ENCODE measurements at regions of chr7 and their contacts with region 1.

Region 1: GRCh38 chr7:50304158-50304910 is at the start of gene IKZF1:
- DNase-seq: peak in 12 of 14 experiments; percentile 31 to 81 (median 62)
- ATAC-seq: peak; percentile 25
- H3K4me3 ChIP-seq: peak within 1 kb of the TSS; percentile 87
- H3K4me3 Mint-ChIP-seq: peak within 1 kb of the TSS; percentile 100
- H3K27ac ChIP-seq: peak within 1 kb of the TSS; percentile 67 to 93
- H3K27ac Mint-ChIP-seq: peak within 1 kb of the TSS; percentile 90
- H3K4me1 ChIP-seq: peaks cover 40% of the 10 kb centered on the region
- H3K4me1 Mint-ChIP-seq: peaks cover 63% of the 10 kb centered on the region
- H3K27me3 ChIP-seq: no peaks in the 10 kb centered on the region
- H3K27me3 Mint-ChIP-seq: no peaks in the 10 kb centered on the region
- CTCF ChIP-seq: no peak
- total RNA-seq, gene IKZF1: 297 to 300 TPM

Region 2: GRCh38 chr7:50147951-50148808 is 156.2 kb before region 1 on chr7:
- CTCF ChIA-PET with region 1: no interaction called
- POLR2A ChIA-PET with region 1: interaction called, 3 read pairs
- intact Hi-C with region 1: loop called (anchors 2 to 5 kb)
- DNase-seq: peak in 6 of 14 experiments; percentile 19 to 85 (median 54)
- ATAC-seq: peak; percentile 86
- H3K4me3 ChIP-seq: no peak overlapping the region
- H3K4me3 Mint-ChIP-seq: peak overlapping the region; percentile 14
- H3K27ac ChIP-seq: peak overlapping the region; percentile 23 to 45
- H3K27ac Mint-ChIP-seq: peak overlapping the region; percentile 81
- H3K4me1 ChIP-seq: peaks cover 36% of the 10 kb centered on the region
- H3K4me1 Mint-ChIP-seq: peaks cover 67% of the 10 kb centered on the region
- H3K27me3 ChIP-seq: no peaks in the 10 kb centered on the region
- H3K27me3 Mint-ChIP-seq: no peaks in the 10 kb centered on the region
- CTCF ChIP-seq: no peak

Region 3: GRCh38 chr7:50272808-50273207 is 31.5 kb before region 1 on chr7:
- CTCF ChIA-PET with region 1: interaction called, 5 read pairs
- POLR2A ChIA-PET with region 1: interaction called, 350 read pairs
- intact Hi-C with region 1: loop called in 1 of 2 experiments (anchors 2 kb)
- DNase-seq: no peak
- ATAC-seq: no peak
- H3K4me3 ChIP-seq: no peak overlapping the region
- H3K4me3 Mint-ChIP-seq: no peak overlapping the region
- H3K27ac ChIP-seq: no peak overlapping the region
- H3K27ac Mint-ChIP-seq: peak overlapping the region; percentile 90
- H3K4me1 ChIP-seq: peaks cover 54% of the 10 kb centered on the region
- H3K4me1 Mint-ChIP-seq: peaks cover 84% of the 10 kb centered on the region
- H3K27me3 ChIP-seq: no peaks in the 10 kb centered on the region
- H3K27me3 Mint-ChIP-seq: no peaks in the 10 kb centered on the region
- CTCF ChIP-seq: no peak

Region 4: DNA sequence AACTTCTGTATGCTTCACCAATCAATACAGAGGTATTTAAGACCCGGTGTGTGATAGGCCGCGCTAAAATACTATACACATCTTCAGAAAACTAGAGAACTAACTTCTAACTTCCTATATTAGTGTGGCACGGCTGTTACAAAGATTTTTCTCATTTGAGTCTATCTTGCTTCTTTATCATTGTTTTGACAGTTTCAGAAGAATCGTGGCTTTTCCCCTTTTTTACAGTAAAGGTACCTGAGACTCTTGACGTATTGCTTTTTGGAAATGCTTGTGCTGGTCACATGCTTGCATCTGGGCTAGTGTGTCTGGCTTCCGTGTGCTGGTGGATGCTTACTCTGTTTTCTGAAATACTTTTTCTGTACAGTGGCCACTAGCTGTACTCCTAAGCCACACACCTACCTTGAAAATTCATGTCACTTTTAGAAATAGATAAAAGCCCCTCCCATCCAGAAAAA is 12.9 kb after region 1 on chr7:
- CTCF ChIA-PET with region 1: interaction called, 45 read pairs
- POLR2A ChIA-PET with region 1: interaction called, 342 read pairs
- intact Hi-C with region 1: loop called (anchors 1 kb)
- DNase-seq: peak in 7 of 14 experiments; percentile 46 to 94 (median 75)
- ATAC-seq: peak; percentile 73
- H3K4me3 ChIP-seq: peak overlapping the region; percentile 55
- H3K4me3 Mint-ChIP-seq: peak overlapping the region; percentile 100
- H3K27ac ChIP-seq: peak overlapping the region; percentile 91 to 93
- H3K27ac Mint-ChIP-seq: no peak overlapping the region
- H3K4me1 ChIP-seq: peaks cover 71% of the 10 kb centered on the region
- H3K4me1 Mint-ChIP-seq: peaks cover 98% of the 10 kb centered on the region
- H3K27me3 ChIP-seq: no peaks in the 10 kb centered on the region
- H3K27me3 Mint-ChIP-seq: no peaks in the 10 kb centered on the region
- CTCF ChIP-seq: peak; percentile 29

Region 5: DNA sequence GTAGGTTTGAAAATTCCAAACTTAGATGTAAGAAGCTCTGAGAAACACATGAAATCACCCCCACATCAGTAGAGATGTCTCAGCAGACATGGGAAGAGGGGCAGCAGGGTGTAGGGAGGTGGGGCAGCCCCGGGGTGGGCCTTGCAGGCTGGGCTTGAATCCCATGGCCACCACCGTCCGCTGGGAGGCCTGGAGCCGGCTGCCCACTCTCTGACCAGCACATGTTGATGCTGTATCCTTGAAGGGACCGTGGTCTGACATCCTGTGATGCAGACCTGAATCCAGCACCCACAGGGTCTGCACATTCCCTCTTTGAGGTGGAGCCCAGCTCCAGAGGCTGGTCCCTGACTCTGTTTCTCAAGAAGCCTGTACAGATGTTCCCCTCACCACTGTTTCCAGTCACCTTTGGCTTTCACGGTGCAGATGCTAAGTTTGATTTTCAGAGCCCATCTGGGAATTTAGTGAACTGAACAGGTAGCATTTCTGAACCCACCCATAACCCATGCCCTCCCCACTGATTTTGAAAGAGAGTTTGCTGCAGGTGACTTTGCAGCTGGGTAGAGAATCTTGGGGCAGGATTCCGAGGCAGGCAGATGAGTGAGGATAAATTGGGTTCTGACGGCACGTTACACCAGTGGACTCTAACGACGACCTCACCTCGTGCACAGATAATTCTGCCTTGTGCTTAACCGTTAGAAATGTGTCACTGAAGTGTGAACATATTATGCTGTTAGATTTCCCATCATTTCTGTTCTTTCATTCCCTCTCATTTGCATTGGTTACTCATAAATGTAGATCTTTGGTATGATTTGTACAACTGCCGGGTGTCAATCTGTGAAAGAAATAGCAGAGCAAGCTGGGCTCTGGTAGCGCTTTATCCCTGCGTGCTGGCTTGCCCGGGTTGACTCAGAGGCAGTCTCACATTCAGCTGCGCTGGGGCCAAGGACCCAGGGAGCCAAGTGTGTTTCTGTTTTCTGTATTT is 45.9 kb after region 1 on chr7:
- CTCF ChIA-PET with region 1: interaction called, 15 read pairs
- POLR2A ChIA-PET with region 1: interaction called, 2,111 read pairs
- intact Hi-C with region 1: loop called in 1 of 2 experiments (anchors 2 kb)
- DNase-seq: peak; percentile 47 to 84 (median 75)
- ATAC-seq: peak; percentile 63
- H3K4me3 ChIP-seq: peak overlapping the region; percentile 23
- H3K4me3 Mint-ChIP-seq: peak overlapping the region; percentile 52
- H3K27ac ChIP-seq: peak overlapping the region; percentile 86 to 95
- H3K27ac Mint-ChIP-seq: no peak overlapping the region
- H3K4me1 ChIP-seq: peaks cover 92% of the 10 kb centered on the region
- H3K4me1 Mint-ChIP-seq: peaks cover 98% of the 10 kb centered on the region
- H3K27me3 ChIP-seq: no peaks in the 10 kb centered on the region
- H3K27me3 Mint-ChIP-seq: no peaks in the 10 kb centered on the region
- CTCF ChIP-seq: no peak

Region 6: DNA sequence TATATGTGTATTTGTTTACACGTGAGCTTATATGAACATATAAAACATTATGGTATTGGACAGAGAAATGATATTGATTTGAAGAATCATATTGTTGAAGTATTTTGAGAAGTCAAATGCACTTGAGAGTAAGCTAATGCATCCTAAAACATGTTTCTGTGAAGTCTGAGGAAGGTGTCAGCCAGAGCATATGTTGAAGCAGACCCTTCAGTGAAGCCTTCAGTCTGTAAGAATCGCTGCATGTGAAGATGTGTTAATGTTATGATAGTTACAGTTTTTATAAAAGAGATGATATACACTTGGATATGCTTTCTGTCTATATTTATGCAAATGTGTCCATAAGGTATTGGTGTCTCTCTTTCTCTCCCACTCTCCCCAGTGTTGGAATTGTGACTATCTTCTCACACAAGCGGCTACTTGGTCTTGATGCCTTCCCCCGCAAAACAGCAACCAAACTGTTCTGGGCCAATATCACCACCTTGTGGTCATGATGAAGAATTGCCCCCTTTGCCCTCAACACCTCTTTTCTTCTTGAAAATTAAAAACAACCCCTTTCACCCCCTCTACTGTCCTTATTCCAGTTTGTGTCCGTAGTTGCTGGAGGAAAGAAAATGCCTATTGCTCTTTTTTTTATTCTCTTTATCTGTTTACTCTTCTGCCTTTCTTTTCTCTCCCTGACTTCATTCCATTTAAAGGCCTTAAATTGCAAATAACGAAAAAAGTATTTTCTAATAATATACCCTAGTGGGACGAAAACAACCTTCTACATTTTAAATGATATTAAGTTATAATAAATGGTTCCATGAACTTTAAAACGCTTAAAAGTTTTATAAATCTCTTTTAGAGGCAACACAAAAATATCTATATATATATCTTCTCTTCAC is 65.1 kb after region 1 on chr7:
- CTCF ChIA-PET with region 1: interaction called, 13 read pairs
- POLR2A ChIA-PET with region 1: interaction called, 2,111 read pairs
- intact Hi-C with region 1: loop called (anchors 1 to 2 kb)
- DNase-seq: peak in 7 of 14 experiments; percentile 45 to 91 (median 65)
- ATAC-seq: peak; percentile 58
- H3K4me3 ChIP-seq: no peak overlapping the region
- H3K4me3 Mint-ChIP-seq: peak overlapping the region; percentile 71
- H3K27ac ChIP-seq: peak overlapping the region; percentile 68 to 73
- H3K27ac Mint-ChIP-seq: no peak overlapping the region
- H3K4me1 ChIP-seq: peaks cover 80% of the 10 kb centered on the region
- H3K4me1 Mint-ChIP-seq: peaks cover 97% of the 10 kb centered on the region
- H3K27me3 ChIP-seq: no peaks in the 10 kb centered on the region
- H3K27me3 Mint-ChIP-seq: no peaks in the 10 kb centered on the region
- CTCF ChIP-seq: peak; percentile 88

Measured in CD4-positive, alpha-beta T cell (primary cell).